ENCODE measurements at regions of chr10 and their contacts with region 1.

Region 1: DNA sequence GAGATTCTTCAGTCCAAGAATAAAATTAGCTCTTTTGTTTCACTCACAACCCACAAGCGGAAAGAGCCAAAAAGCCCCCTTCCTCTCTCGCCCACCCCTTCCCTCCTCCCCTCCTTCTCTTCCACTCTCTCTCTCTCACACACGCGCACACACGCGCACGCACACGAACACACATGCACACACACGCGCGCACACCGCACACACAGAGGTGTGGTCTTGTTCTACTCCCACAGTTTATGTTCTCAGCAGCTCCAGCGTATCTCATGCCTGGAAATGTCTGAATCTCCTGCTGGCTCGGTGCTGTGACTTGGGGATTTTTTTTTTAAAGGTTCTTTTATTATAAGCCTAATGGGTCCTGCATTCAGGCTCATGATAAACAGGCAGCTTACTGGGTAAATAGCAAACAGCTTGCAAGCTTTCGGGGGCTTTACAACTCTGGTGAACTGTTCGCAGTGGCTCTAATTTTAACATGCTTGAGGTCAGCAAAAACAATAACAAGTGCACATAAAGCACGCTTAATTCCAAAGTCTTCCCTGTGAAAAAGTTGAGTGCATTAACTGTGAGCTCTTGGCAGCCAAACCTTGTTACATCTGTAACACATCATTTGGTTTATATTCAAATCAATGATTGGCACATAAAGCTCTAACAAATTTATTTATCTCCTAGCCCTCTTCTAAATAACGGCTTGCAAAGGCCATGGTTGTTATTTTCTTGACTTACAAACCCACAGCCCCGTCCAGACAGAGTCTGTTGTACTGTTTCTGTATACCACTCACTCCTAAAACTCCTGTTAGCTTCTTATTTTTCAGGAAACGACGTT is 424.1 kb upstream of the MGMT start:
- DNase-seq: no peak
- ATAC-seq: no peak
- H3K4me3 ChIP-seq: no peak overlapping the region
- H3K27ac ChIP-seq: no peak overlapping the region
- H3K4me1 ChIP-seq: no peaks in the 10 kb centered on the region
- H3K27me3 ChIP-seq: peaks cover 8% of the 10 kb centered on the region; the same call in 1 of the 2 replicates
- CTCF ChIP-seq: no peak

Region 2: DNA sequence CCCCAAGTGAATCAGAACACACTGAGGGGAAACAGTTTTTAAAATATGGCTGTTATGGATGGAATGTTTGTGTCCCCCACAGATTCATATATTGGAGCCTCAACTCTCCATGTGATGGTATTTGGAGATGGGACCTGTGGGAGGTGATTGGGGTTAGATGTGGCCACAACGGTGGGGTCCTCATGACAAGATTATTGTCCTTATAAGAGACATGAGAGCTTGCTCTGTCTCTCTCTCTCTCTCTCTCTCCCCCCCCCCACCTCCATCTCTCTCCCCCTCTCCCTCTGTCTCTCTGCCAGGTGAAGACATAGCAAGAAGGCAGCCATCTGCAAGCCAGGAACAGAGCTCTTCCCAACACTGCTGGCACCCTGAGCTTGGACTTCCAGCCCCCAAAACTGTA is 108.3 kb after region 1 on chr10:
- CTCF ChIA-PET with region 1: no interaction called
- POLR2A ChIA-PET with region 1: no interaction called
- in situ Hi-C with region 1: no loop called
- intact Hi-C with region 1: no loop called
- DNase-seq: no peak
- ATAC-seq: no peak
- H3K4me3 ChIP-seq: no peak overlapping the region
- H3K27ac ChIP-seq: no peak overlapping the region
- H3K4me1 ChIP-seq: no peaks in the 10 kb centered on the region
- H3K27me3 ChIP-seq: no peaks in the 10 kb centered on the region
- CTCF ChIP-seq: no peak

Region 3: DNA sequence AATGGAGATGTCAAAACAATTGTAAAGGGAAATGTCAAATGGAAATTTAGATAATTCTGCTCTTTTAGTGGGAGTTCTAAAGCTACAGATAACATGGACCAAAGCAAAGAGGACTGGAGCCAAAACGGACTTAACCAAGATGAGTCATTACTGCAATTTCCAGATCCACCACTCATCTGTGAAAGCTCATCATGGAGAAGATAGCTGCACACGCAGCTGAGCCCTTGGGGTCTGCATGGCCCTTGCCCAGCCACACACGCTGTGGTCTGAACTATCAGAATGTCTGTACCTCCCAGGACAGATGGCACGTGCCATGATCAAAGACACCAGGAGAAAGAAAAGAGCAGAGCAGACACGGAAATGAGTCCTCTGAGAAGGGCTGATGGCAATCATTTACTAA is 246.0 kb after region 1 on chr10:
- CTCF ChIA-PET with region 1: no interaction called
- POLR2A ChIA-PET with region 1: interaction called, 13 read pairs
- in situ Hi-C with region 1: no loop called
- intact Hi-C with region 1: no loop called
- DNase-seq: no peak
- ATAC-seq: no peak
- H3K4me3 ChIP-seq: no peak overlapping the region
- H3K27ac ChIP-seq: no peak overlapping the region
- H3K4me1 ChIP-seq: no peaks in the 10 kb centered on the region
- H3K27me3 ChIP-seq: no peaks in the 10 kb centered on the region; the same call in 1 of the 2 replicates
- CTCF ChIP-seq: no peak